ENCODE measurements at regions of chr11 and their contacts with region 1.

Region 1: GRCh38 chr11:17384002-17384511 is 4.4 kb downstream of the KCNJ11 start:
- DNase-seq: peak; percentile 66
- H3K4me3 ChIP-seq: no peak overlapping the region
- H3K27ac ChIP-seq: no peak overlapping the region
- H3K4me1 ChIP-seq: no peaks in the 10 kb centered on the region
- H3K27me3 ChIP-seq: no peaks in the 10 kb centered on the region
- CTCF ChIP-seq: peak; percentile 82 to 87
- POLR2A ChIP-seq: no peak

Region 2: GRCh38 chr11:17230867-17231851 is 152.9 kb before region 1 on chr11:
- CTCF ChIA-PET with region 1: interaction called, 7 read pairs
- POLR2A ChIA-PET with region 1: no interaction called
- dilution Hi-C with region 1: no loop called
- intact Hi-C with region 1: loop called (anchors 1 kb)
- DNase-seq: no peak
- H3K4me3 ChIP-seq: no peak overlapping the region
- H3K27ac ChIP-seq: no peak overlapping the region
- H3K4me1 ChIP-seq: peaks cover 3% of the 10 kb centered on the region
- H3K27me3 ChIP-seq: no peaks in the 10 kb centered on the region
- CTCF ChIP-seq: no peak
- POLR2A ChIP-seq: no peak

Region 3: DNA sequence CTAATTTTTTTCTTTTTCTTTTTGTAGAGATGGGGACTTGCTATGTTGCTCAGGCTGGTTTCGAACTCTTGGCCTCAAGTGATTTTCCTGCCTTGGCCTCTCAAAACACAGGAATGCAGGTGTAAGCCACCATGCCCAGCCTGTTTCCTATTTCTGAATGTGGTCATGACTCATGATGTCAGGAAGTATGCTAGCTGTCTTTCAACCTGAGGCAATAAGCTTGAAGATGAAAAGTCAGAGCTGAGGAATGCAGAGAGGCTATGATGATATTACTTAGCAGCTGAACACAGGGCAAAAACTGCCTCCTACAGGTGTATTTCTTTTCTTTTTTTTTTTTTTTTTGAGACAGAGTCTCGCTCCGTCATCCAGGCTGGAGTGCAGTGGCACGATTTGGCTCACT is 116.5 kb before region 1 on chr11:
- CTCF ChIA-PET with region 1: no interaction called
- POLR2A ChIA-PET with region 1: no interaction called
- dilution Hi-C with region 1: no loop called
- intact Hi-C with region 1: no loop called
- DNase-seq: peak; percentile 40
- H3K4me3 ChIP-seq: no peak overlapping the region
- H3K27ac ChIP-seq: no peak overlapping the region
- H3K4me1 ChIP-seq: no peaks in the 10 kb centered on the region
- H3K27me3 ChIP-seq: no peaks in the 10 kb centered on the region
- CTCF ChIP-seq: no peak
- POLR2A ChIP-seq: no peak

Region 4: GRCh38 chr11:17298302-17298701 is 85.8 kb before region 1 on chr11:
- CTCF ChIA-PET with region 1: no interaction called
- POLR2A ChIA-PET with region 1: no interaction called
- dilution Hi-C with region 1: no loop called
- intact Hi-C with region 1: no loop called
- DNase-seq: no peak
- H3K4me3 ChIP-seq: no peak overlapping the region
- H3K27ac ChIP-seq: no peak overlapping the region
- H3K4me1 ChIP-seq: no peaks in the 10 kb centered on the region
- H3K27me3 ChIP-seq: no peaks in the 10 kb centered on the region
- CTCF ChIP-seq: no peak
- POLR2A ChIP-seq: no peak

Region 5: GRCh38 chr11:17396598-17397310 is 12.7 kb after region 1 on chr11:
- CTCF ChIA-PET with region 1: interaction called, 11 read pairs
- POLR2A ChIA-PET with region 1: no interaction called
- dilution Hi-C with region 1: no loop called
- intact Hi-C with region 1: no loop called
- DNase-seq: no peak
- H3K4me3 ChIP-seq: no peak overlapping the region
- H3K27ac ChIP-seq: no peak overlapping the region
- H3K4me1 ChIP-seq: no peaks in the 10 kb centered on the region
- H3K27me3 ChIP-seq: no peaks in the 10 kb centered on the region
- CTCF ChIP-seq: no peak
- POLR2A ChIP-seq: no peak

Region 6: DNA sequence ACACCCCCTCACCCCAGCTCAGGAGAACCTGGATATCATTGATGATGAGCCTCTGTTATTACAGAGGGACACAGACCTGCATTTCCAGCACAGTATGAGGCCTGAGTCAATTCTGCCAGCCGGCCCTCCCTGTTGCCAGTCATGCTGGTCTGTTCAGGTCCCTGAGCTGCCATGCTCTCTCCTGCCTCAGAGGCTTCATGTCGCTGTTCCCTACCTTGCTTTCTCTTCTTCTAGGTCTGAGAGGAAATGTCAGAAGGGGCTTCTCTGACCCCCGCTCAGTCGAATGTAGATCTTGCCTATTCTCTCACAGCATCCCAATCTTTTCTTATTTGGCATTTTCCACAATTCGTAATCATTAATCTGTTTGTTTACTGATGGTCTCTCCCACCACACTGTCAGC is 114.4 kb after region 1 on chr11:
- CTCF ChIA-PET with region 1: interaction called, 184 read pairs
- POLR2A ChIA-PET with region 1: no interaction called
- dilution Hi-C with region 1: no loop called
- intact Hi-C with region 1: no loop called
- DNase-seq: no peak
- H3K4me3 ChIP-seq: no peak overlapping the region
- H3K27ac ChIP-seq: no peak overlapping the region
- H3K4me1 ChIP-seq: no peaks in the 10 kb centered on the region
- H3K27me3 ChIP-seq: peaks cover 0 to 2% of the 10 kb centered on the region in 2 experiments
- CTCF ChIP-seq: no peak
- POLR2A ChIP-seq: no peak

Region 7: GRCh38 chr11:17552392-17553248 is 168.6 kb after region 1 on chr11:
- CTCF ChIA-PET with region 1: no interaction called
- POLR2A ChIA-PET with region 1: no interaction called
- dilution Hi-C with region 1: no loop called
- intact Hi-C with region 1: no loop called
- DNase-seq: peak; percentile 6
- H3K4me3 ChIP-seq: no peak overlapping the region
- H3K27ac ChIP-seq: no peak overlapping the region
- H3K4me1 ChIP-seq: no peaks in the 10 kb centered on the region
- H3K27me3 ChIP-seq: peaks cover 0 to 4% of the 10 kb centered on the region in 2 experiments
- CTCF ChIP-seq: no peak
- POLR2A ChIP-seq: no peak